ENCODE measurements at regions of chr11 and their contacts with region 1.

Region 1: GRCh38 chr11:46346886-46347636 is at the start of gene DGKZ:
- DNase-seq: peak; percentile 85 to 96 (median 93)
- ATAC-seq: peak; percentile 63 to 68
- H3K4me3 Mint-ChIP-seq: peak within 1 kb of the TSS; percentile 78 to 98 (median 94)
- H3K27ac Mint-ChIP-seq: peak within 1 kb of the TSS; percentile 91 to 98 (median 94)
- H3K4me1 Mint-ChIP-seq: peaks cover 56 to 89% (median 83%) of the 10 kb centered on the region in 4 donors
- H3K27me3 Mint-ChIP-seq: no peaks in the 10 kb centered on the region
- polyA plus RNA-seq, gene DGKZ: 47.1 to 71.0 (median 52.5) TPM

Region 2: GRCh38 chr11:46259971-46260560 is 87.0 kb before region 1 on chr11:
- POLR2A ChIA-PET with region 1: no interaction called
- DNase-seq: no peak
- ATAC-seq: no peak
- H3K4me3 Mint-ChIP-seq: no peak overlapping the region
- H3K27ac Mint-ChIP-seq: no peak overlapping the region
- H3K4me1 Mint-ChIP-seq: no peaks in the 10 kb centered on the region
- H3K27me3 Mint-ChIP-seq: peaks cover 0 to 2% (median 2%) of the 10 kb centered on the region in 5 donors

Region 3: GRCh38 chr11:46285594-46286033 is 61.4 kb before region 1 on chr11:
- POLR2A ChIA-PET with region 1: no interaction called
- DNase-seq: no peak
- ATAC-seq: no peak
- H3K4me3 Mint-ChIP-seq: no peak overlapping the region
- H3K27ac Mint-ChIP-seq: no peak overlapping the region
- H3K4me1 Mint-ChIP-seq: peaks cover 0 to 12% (median 8%) of the 10 kb centered on the region in 4 donors
- H3K27me3 Mint-ChIP-seq: peaks cover 2 to 17% (median 9%) of the 10 kb centered on the region in 5 donors

Region 4: GRCh38 chr11:46332568-46333393 is 14.3 kb before region 1 on chr11:
- POLR2A ChIA-PET with region 1: interaction called, 303 read pairs
- DNase-seq: peak in 9 of 10 donors; percentile 38 to 74 (median 52)
- ATAC-seq: peak; percentile 33 to 54
- H3K4me3 Mint-ChIP-seq: peak overlapping the region; percentile 78 to 96 (median 92)
- H3K27ac Mint-ChIP-seq: peak overlapping the region; percentile 83 to 99 (median 96)
- H3K4me1 Mint-ChIP-seq: peaks cover 27 to 73% (median 68%) of the 10 kb centered on the region in 4 donors
- H3K27me3 Mint-ChIP-seq: peaks cover 0 to 18% (median 0%) of the 10 kb centered on the region in 5 donors

Region 5: GRCh38 chr11:46367244-46367915 is 20.3 kb after region 1 on chr11:
- POLR2A ChIA-PET with region 1: interaction called, 287 read pairs
- DNase-seq: peak; percentile 59 to 86 (median 82)
- ATAC-seq: peak; percentile 93 to 94
- H3K4me3 Mint-ChIP-seq: peak overlapping the region in 4 of 10 donors; percentile 27 to 72 (median 56)
- H3K27ac Mint-ChIP-seq: peak overlapping the region in 7 of 10 donors; percentile 36 to 86 (median 53)
- H3K4me1 Mint-ChIP-seq: peaks cover 16 to 62% (median 45%) of the 10 kb centered on the region in 4 donors
- H3K27me3 Mint-ChIP-seq: no peaks in the 10 kb centered on the region